Right cardiac atrium (tissue), 5 donors: ENCODE measurements at regions of chr2 and their contacts with region 1.

Region 1: GRCh38 chr2:160493227-160494028 is at the start of gene RBMS1:
- DNase-seq: peak; percentile 71 to 89 (median 88)
- ATAC-seq: peak; percentile 78 to 85
- H3K4me3 ChIP-seq: peak within 1 kb of the TSS; percentile 96
- H3K27ac ChIP-seq: peak within 1 kb of the TSS; percentile 99
- H3K4me1 ChIP-seq: no peaks in the 10 kb centered on the region
- H3K27me3 ChIP-seq: no peaks in the 10 kb centered on the region
- total RNA-seq, gene RBMS1: 56.8 to 73.5 (median 66.8) TPM

Region 2: GRCh38 chr2:160406591-160407392 is 86.6 kb before region 1 on chr2:
- intact Hi-C with region 1: loop called in 2 of 4 experiments (anchors 10 kb)
- DNase-seq: peak in 2 of 3 donors; percentile 43 to 83
- ATAC-seq: peak; percentile 47 to 55
- H3K4me3 ChIP-seq: peak overlapping the region; percentile 83
- H3K27ac ChIP-seq: peak overlapping the region; percentile 80
- H3K4me1 ChIP-seq: peaks cover 14% of the 10 kb centered on the region
- H3K27me3 ChIP-seq: no peaks in the 10 kb centered on the region

Region 3: DNA sequence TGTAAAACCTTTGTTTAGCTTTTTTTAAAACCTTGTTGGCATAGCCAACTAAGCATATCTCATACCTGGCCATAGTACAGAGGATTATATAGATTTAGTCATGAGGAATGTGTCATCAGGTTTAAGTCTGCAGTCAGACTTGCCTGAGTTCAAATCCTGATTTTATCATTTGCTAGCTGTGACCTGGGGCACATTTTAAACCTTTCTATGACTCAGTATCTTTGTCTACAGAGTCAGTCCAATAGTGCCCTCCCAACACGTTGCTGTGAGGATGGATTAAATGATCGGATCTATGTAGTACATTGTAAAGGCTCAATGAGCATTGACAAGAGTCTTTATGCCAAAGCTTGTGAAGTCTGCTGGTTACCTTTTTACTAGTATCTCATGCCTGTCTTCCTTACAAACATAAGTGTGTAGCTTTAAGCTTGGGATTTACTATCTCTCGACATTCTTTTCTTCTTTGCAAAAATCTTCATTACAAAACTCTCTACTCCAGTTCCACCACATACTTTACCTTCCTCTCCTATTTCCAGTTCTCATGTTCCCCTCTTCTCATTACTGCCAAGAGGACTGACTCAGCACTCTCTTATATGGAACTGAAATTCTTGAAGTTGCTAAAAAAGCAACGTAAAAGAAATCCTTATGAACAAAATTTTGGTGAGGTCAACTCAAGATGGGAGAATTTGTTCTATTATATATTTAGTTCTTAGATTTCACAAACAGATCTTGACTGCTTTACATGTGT is 68.3 kb after region 1 on chr2:
- intact Hi-C with region 1: loop called in 1 of 4 experiments (anchors 10 kb)
- DNase-seq: no peak
- ATAC-seq: no peak
- H3K4me3 ChIP-seq: no peak overlapping the region
- H3K27ac ChIP-seq: no peak overlapping the region
- H3K4me1 ChIP-seq: no peaks in the 10 kb centered on the region
- H3K27me3 ChIP-seq: no peaks in the 10 kb centered on the region

Region 4: GRCh38 chr2:160666154-160667060 is 173.0 kb after region 1 on chr2:
- intact Hi-C with region 1: loop called in 1 of 4 experiments (anchors 10 kb)
- DNase-seq: no peak
- ATAC-seq: peak; percentile 98 to 99
- H3K4me3 ChIP-seq: no peak overlapping the region
- H3K27ac ChIP-seq: peak overlapping the region; percentile 76
- H3K4me1 ChIP-seq: peaks cover 4% of the 10 kb centered on the region
- H3K27me3 ChIP-seq: no peaks in the 10 kb centered on the region